ENCODE measurements at regions of chr1 and their contacts with region 1.

Region 1: GRCh38 chr1:27154991-27155781 is at the start of gene SLC9A1:
- DNase-seq: peak; percentile 91 to 92
- H3K4me3 ChIP-seq: peak within 1 kb of the TSS; percentile 76
- H3K27ac ChIP-seq: peak within 1 kb of the TSS; percentile 80
- H3K4me1 ChIP-seq: peaks cover 34% of the 10 kb centered on the region
- H3K27me3 ChIP-seq: no peaks in the 10 kb centered on the region
- CTCF ChIP-seq: peak; percentile 64
- total RNA-seq, gene SLC9A1: 17.9 and 27.5 TPM in 2 replicates

Region 2: DNA sequence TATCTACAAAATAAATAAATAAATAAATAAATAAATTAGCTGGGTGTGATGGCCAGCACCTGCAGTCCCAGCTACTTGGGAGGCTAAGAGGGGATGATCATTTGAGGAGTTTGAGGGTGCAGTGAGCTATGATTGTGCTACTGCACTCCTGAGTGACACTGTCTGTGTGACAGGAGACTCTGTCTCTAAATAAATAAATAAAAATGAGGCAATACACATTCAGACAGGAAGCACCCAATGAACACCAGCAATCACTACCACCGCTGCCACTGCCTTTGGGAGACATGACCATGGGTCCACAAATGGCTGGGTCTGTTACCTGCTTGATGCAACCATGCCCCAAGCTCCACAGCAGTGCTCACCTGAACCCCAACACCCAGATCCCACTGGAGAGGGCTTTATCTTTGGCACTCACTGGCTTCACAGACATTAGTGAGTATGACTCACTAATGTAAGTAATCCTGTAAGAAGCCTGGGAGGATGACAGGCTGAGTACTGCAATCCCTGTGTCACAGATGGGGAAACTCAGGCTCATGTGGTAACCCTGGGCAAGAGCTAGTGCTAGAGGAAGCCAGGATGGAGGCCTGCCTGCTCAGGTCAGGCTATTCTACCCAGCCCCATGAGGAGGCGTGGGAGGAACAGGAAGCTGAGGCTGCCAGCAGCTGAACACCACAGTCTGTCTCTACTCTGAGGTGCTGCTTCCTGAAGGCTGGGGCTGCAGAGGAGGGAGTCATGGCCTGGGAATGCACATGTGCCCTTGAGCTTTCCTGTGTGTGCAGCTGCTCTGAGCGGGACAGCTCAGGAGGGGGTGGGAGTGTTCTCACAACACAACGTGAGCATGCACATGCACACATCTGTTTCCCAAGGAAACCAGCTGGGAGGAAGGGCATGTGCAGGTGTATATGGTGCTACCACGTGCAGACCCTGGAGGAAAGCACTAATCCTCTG is 43.3 kb before region 1 on chr1:
- CTCF ChIA-PET with region 1: interaction called, 11 read pairs
- POLR2A ChIA-PET with region 1: interaction called, 3 read pairs
- intact Hi-C with region 1: loop called (anchors 1 kb)
- DNase-seq: peak; percentile 80 to 94
- H3K4me3 ChIP-seq: no peak overlapping the region
- H3K27ac ChIP-seq: peak overlapping the region; percentile 75
- H3K4me1 ChIP-seq: peaks cover 18% of the 10 kb centered on the region
- H3K27me3 ChIP-seq: no peaks in the 10 kb centered on the region
- CTCF ChIP-seq: no peak; the same call in 1 of the 2 replicates

Region 3: GRCh38 chr1:27142464-27142863 is 12.7 kb before region 1 on chr1:
- CTCF ChIA-PET with region 1: interaction called, 4 read pairs
- POLR2A ChIA-PET with region 1: interaction called, 8 read pairs
- intact Hi-C with region 1: loop called (anchors 1 kb)
- DNase-seq: peak; percentile 84 to 86
- H3K4me3 ChIP-seq: peak overlapping the region; percentile 16; the same call in 1 of the 2 replicates
- H3K27ac ChIP-seq: peak overlapping the region; percentile 65
- H3K4me1 ChIP-seq: peaks cover 70% of the 10 kb centered on the region
- H3K27me3 ChIP-seq: no peaks in the 10 kb centered on the region
- CTCF ChIP-seq: no peak

Region 4: DNA sequence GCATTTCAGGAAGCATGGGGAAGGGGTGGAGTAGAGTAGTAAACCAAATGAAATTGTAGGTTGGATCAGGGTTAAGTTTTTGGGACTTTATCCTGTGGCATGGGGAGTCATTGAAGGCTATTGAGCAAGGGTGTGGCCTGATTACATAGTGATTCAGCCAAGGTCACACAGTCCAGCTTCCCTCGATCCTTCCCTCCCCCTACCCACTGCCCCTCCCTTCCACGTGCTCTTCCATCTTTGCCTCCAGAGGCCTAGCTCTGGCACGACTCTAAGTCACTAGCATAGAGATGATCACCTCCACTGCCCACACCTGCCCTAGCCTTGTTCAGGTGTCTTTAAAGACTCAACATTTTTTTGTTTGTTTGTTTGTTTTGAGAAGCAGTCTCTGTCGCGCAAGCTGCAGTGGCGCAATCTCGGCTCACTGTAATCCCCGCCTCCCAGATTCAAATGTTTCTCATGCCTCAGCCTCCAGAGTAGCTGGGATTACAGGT is 36.9 kb after region 1 on chr1:
- CTCF ChIA-PET with region 1: no interaction called
- POLR2A ChIA-PET with region 1: no interaction called
- intact Hi-C with region 1: loop called (anchors 1 kb)
- DNase-seq: peak; percentile 44 to 78
- H3K4me3 ChIP-seq: no peak overlapping the region
- H3K27ac ChIP-seq: peak overlapping the region; percentile 94
- H3K4me1 ChIP-seq: peaks cover 21% of the 10 kb centered on the region
- H3K27me3 ChIP-seq: no peaks in the 10 kb centered on the region
- CTCF ChIP-seq: no peak

Region 5: GRCh38 chr1:27241677-27242076 is 86.5 kb after region 1 on chr1:
- CTCF ChIA-PET with region 1: no interaction called
- POLR2A ChIA-PET with region 1: interaction called, 28 read pairs
- intact Hi-C with region 1: no loop called
- DNase-seq: no peak
- H3K4me3 ChIP-seq: no peak overlapping the region
- H3K27ac ChIP-seq: no peak overlapping the region
- H3K4me1 ChIP-seq: no peaks in the 10 kb centered on the region
- H3K27me3 ChIP-seq: no peaks in the 10 kb centered on the region
- CTCF ChIP-seq: no peak

Region 6: DNA sequence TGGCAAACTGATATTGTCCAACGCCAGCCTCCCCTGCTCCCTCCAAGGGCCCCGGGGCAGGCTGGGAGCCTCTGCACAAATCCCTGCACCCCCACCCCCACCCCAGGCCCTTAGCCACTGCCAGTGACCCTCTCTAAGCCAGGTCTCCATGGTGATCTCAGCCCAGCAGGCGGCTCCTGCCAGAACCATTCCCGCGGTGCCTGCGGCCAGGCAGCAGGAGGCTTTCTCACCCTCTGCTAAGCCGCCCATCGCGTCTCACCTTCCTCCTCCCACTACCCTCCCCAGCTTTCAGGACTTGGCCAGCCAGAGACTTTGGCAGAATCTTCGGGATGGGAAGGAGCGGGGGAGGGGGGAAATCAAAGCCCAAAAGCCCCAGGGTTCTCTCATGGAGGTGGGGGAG is 381.6 kb after region 1 on chr1:
- CTCF ChIA-PET with region 1: interaction called, 10 read pairs
- POLR2A ChIA-PET with region 1: no interaction called
- intact Hi-C with region 1: no loop called
- DNase-seq: peak in 1 of 2 experiments; percentile 35
- H3K4me3 ChIP-seq: no peak overlapping the region
- H3K27ac ChIP-seq: no peak overlapping the region
- H3K4me1 ChIP-seq: peaks cover 47% of the 10 kb centered on the region
- H3K27me3 ChIP-seq: no peaks in the 10 kb centered on the region
- CTCF ChIP-seq: no peak